Right ventricle myocardium superior (tissue), 1 donor: ENCODE measurements at regions of chr4 and their contacts with region 1.

Region 1: GRCh38 chr4:77095101-77095821 is 19.5 kb upstream of the CCNI start:
- DNase-seq: peak; percentile 89
- ATAC-seq: peak; percentile 98

Region 2: DNA sequence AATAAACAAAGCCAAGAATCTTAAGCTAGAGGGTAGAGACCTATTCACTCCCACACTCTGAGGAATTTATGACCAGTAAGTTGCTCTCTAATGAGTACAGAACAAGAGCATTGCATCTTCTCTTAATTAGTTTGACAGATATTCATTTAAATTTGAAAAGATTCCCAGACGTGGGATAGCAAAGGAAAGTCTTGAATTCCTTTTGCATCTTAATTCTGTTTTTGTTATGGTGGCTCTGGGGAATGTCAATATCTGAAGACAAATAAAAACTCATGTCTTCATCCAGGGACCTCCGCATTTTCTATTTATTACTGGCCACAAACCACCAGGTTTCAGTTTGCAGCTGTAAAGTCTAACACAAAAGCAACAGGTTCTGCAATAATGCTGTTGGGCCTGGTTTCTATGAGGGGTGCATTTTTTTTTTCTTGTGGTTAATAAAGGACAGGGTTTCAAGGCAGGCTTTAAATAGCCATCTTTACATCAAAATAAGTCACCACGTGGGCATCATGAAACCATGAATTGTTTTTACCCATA is 487.9 kb before region 1 on chr4:
- intact Hi-C with region 1: no loop called
- DNase-seq: no peak
- ATAC-seq: no peak

Region 3: DNA sequence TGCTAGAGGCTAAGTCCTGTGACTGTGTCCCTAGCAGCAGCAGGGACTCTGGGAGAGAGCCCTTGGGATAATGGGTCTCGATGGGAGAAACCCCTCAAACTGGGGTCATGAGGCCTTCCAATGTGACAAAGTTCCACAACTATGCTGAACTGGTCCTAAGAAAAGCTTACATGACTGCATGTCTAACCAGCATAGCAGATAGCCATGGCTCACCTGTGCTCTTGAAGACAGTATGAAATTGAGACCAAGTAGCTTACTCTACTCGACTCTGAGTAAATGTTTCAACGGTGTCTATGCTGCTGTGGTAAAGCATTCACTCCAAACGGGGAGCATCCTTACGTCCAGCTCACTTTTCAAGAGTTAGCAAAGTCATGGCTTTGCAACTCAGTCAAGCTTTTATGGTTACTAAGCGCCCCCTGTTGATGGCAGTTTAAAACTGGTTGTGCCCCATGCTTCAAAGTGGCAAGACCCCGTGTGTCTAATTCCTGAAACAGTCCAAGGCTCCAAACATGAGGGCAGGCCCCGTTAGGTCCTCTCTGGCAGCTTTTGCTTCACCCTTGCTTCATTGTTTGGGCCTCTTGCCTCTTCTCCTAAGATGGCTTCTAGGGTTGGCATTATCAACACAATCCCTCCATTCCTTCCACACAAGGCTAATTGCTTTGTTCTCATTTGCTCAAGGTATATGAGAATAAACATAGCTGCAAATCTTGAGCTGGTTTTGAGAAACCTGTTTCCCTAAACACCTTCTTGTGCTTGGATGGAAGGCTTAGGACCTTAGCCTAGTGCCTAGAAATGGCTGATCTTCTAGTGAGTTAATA is 108.3 kb after region 1 on chr4:
- intact Hi-C with region 1: loop called (anchors 10 kb)
- DNase-seq: peak; percentile 44
- ATAC-seq: peak; percentile 80

Region 4: GRCh38 chr4:77251751-77252150 is 156.5 kb after region 1 on chr4:
- intact Hi-C with region 1: no loop called
- DNase-seq: no peak
- ATAC-seq: no peak

Region 5: DNA sequence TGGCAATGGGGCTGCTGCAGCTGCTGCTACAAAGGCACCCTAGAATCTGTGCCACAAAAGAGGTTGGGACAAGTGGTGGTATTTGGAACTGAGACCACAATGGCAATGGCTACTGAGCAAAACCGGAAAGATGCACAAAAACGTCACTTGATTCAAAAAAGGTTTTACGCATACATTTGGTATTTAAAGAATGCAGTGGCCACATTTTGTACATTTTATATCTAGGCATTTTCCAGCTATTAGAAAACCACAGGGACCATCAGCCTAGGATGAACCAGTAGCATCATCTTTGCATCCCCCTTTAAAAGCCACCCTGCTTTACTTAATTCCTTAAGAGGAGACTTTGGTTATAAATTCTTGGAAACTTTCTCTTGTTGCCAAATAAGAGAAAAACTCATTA is 405.5 kb after region 1 on chr4:
- intact Hi-C with region 1: no loop called
- DNase-seq: no peak
- ATAC-seq: no peak